ENCODE measurements at regions of chr15 and their contacts with region 1.

Region 1: DNA sequence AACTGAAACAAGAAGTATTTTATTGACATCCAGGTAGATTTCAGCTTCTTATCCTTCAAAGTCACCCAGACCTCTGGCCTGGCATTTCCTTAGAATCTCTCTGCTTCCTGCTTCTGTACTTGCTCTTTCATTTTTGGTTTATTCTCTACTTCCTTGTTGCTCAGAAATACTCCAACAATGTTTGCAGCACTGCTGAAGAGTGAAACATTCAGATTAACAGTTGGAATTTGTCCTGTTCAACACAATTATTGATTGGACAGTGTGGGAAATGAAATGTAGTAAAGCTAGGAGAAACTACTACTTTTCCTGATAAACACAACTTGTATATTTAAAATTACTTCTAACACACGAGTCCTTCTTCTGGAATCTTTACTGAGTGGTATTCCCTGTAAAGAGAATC is 81.0 kb upstream of the MEIS2 start:
- DNase-seq: no peak
- H3K4me3 ChIP-seq: no peak overlapping the region
- H3K27ac ChIP-seq: no peak overlapping the region
- H3K4me1 ChIP-seq: no peaks in the 10 kb centered on the region
- H3K27me3 ChIP-seq: no peaks in the 10 kb centered on the region
- CTCF ChIP-seq: no peak
- POLR2A ChIP-seq: no peak

Region 2: DNA sequence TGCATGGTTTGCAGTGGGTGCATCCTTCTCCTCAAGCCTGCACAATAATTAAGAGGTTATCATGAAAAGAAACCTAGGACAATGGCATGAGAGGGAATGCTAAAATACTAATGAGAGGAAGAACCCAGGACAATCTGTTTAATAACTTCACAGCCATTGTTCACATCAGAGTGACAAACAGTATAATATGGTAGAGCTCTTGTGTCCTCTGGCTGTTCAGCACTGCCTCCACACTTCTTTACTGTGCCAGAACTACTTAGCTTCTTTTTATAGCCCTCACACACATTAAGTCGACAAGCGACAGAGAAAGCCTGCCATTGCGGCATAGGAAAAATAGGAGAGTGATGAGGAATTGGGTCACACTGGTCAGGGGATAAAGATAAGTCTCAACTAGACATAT is 15.9 kb before region 1 on chr15:
- CTCF ChIA-PET with region 1: no interaction called
- POLR2A ChIA-PET with region 1: no interaction called
- dilution Hi-C with region 1: no loop called
- intact Hi-C with region 1: loop called (anchors 1 kb)
- DNase-seq: no peak
- H3K4me3 ChIP-seq: no peak overlapping the region
- H3K27ac ChIP-seq: no peak overlapping the region
- H3K4me1 ChIP-seq: no peaks in the 10 kb centered on the region
- H3K27me3 ChIP-seq: no peaks in the 10 kb centered on the region
- CTCF ChIP-seq: no peak
- POLR2A ChIP-seq: no peak